H1 (cell line): ENCODE measurements at regions of chr19 and their contacts with region 1.

Region 1: GRCh38 chr19:45643024-45643926 is 4.1 kb upstream of the EML2 start:
- DNase-seq: peak in 1 of 2 experiments; percentile 99
- H3K4me3 ChIP-seq: peak overlapping the region; percentile 34 to 89 (median 70)
- H3K27ac ChIP-seq: no peak overlapping the region
- H3K4me1 ChIP-seq: peaks cover 6 to 30% (median 17%) of the 10 kb centered on the region in 4 experiments
- H3K27me3 ChIP-seq: peaks cover 0 to 6% (median 2%) of the 10 kb centered on the region in 4 experiments; a peak in 4 of 7 replicates
- CTCF ChIP-seq: peak; percentile 97 to 99 (median 98)
- EP300 ChIP-seq: no peak
- POLR2A ChIP-seq: peak in 1 of 2 experiments; percentile 31; a peak in 1 of 3 replicates
- RAD21 ChIP-seq: peak; percentile 96 to 98

Region 2: DNA sequence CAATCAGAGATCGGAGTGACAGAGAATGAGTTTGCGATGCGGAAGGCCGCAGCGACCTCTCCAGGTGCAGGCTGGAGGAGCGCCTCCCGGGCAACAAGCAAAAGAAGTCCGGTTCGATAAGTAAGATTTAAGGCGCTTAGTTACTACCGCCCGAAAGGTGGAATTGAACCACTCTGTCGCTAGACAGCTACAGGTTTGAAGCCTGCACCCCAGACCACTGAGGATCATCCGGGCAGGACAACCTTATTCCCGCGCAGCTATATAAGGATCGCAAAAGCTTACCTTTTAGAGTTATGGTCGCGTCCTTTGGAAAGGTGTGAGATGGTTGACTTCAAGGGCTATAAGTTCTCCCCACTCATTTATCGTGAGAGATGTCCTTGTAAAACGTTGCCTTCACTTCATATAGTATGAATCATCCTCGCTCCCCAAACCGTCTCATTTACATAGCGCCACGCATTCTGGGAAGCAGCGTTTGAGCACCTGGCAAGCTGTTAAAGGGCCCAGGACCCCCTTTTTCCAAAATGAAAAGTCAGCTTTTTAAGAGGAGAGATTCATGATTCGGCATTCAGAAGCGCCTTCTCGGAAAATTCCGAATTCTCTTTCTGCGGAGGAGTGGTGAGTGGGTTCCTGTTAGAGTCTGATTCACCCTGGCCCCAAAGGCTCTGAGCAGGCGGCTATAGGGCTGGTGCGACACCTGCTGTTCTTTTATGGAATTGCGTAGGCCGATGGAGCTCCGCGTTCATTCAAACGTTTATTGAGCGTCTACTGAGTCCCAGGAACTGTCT is 164.6 kb before region 1 on chr19:
- CTCF ChIA-PET with region 1: interaction called, 12 read pairs
- POLR2A ChIA-PET with region 1: no interaction called
- DNase-seq: peak in 1 of 2 experiments; percentile 94
- H3K4me3 ChIP-seq: peak overlapping the region; percentile 44 to 82 (median 75); a peak in 7 of 8 replicates
- H3K27ac ChIP-seq: peak overlapping the region; percentile 97
- H3K4me1 ChIP-seq: peaks cover 2 to 5% (median 3%) of the 10 kb centered on the region in 4 experiments
- H3K27me3 ChIP-seq: no peaks in the 10 kb centered on the region; a peak in 2 of 7 replicates
- CTCF ChIP-seq: peak; percentile 87 to 93 (median 91)
- EP300 ChIP-seq: no peak
- POLR2A ChIP-seq: peak in 1 of 2 experiments; percentile 71; a peak in 2 of 3 replicates
- RAD21 ChIP-seq: peak; percentile 90

Region 3: GRCh38 chr19:45515081-45515624 is 128.1 kb before region 1 on chr19:
- CTCF ChIA-PET with region 1: interaction called, 10 read pairs
- POLR2A ChIA-PET with region 1: no interaction called
- DNase-seq: no peak
- H3K4me3 ChIP-seq: no peak overlapping the region
- H3K27ac ChIP-seq: no peak overlapping the region
- H3K4me1 ChIP-seq: no peaks in the 10 kb centered on the region
- H3K27me3 ChIP-seq: no peaks in the 10 kb centered on the region
- CTCF ChIP-seq: no peak
- EP300 ChIP-seq: no peak
- POLR2A ChIP-seq: no peak
- RAD21 ChIP-seq: no peak

Region 4: DNA sequence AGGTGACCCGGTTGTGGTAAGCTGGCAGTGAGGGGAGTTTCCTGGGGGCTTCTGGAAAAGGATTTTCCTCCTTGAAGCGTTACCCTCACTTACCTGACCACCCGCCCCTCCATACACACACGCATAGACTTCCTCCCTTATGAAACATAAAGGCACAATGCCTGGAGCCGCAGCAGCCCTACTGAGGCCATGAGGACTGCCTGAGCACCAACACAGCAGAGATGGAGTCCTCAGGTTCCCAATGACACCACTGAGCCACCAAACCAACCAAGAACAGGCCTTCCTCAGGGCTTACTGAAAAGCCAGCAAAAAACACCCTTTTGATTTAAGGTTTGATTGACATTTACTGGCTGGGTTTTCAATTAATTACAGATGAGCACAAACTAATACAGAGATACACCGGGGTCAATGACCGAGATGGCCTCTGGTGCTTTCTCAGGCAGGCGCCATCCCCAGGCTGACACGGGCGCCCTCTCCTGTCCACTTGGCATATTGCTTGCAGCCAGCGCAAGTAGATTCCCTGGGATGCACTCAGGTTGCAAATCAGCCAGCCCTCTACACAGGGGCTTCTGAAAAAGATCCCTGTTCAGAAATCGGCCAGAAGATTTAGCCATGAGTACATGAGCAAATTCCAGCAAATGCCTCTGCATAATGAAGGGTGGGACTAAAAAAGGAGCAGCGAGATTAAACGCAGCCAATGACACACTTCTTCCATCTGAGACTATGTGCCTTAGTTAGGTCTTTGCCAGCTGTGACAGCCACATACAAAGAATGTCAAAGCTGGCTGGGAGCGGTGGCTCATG is 73.5 kb before region 1 on chr19:
- CTCF ChIA-PET with region 1: interaction called, 17 read pairs
- POLR2A ChIA-PET with region 1: no interaction called
- DNase-seq: peak; percentile 46 to 96
- H3K4me3 ChIP-seq: no peak overlapping the region
- H3K27ac ChIP-seq: no peak overlapping the region
- H3K4me1 ChIP-seq: no peaks in the 10 kb centered on the region; a peak in 1 of 7 replicates
- H3K27me3 ChIP-seq: no peaks in the 10 kb centered on the region
- CTCF ChIP-seq: peak; percentile 93 to 98 (median 95)
- EP300 ChIP-seq: no peak
- POLR2A ChIP-seq: no peak
- RAD21 ChIP-seq: peak; percentile 79 to 87

Region 5: DNA sequence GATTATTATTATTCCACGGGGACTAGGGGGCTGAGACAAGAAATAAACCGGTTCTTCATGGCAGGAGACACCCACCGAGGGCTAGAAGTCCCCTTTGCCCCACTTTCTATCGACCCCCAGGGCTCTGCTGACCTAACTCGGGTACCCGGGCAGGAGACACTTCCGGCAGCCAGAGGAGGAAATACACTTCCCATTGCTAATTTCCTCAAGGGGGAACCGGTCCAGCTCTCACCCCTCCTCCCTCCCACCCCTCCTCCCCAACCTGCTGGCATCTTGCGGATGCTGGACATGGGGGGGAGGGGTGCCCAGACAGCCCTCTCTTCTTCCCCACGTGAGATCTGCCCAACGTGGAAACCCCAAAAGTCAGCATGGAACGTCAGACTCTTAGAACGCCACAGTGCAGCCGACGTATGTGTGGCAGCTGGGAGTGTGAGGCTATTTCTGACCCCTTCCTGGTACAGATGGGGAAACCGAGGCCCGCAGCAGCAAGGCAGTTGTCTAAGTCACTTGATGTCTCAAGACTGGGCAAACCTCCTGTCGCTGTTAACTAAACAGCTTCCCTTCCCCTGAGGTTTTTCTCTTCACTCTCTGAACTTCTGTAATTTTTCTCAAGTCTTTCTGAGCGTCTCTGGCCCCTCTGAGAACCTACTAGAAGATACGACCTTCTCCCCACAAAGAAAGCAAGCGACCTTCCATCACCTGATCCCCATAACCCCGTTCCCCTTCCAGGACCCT is 44.8 kb before region 1 on chr19:
- CTCF ChIA-PET with region 1: interaction called, 135 read pairs
- POLR2A ChIA-PET with region 1: interaction called, 15 read pairs
- DNase-seq: no peak
- H3K4me3 ChIP-seq: peak overlapping the region; percentile 14 to 58 (median 30); a peak in 6 of 8 replicates
- H3K27ac ChIP-seq: no peak overlapping the region
- H3K4me1 ChIP-seq: peaks cover 12 to 25% (median 13%) of the 10 kb centered on the region in 4 experiments; a peak in 6 of 7 replicates
- H3K27me3 ChIP-seq: peaks cover 36 to 56% (median 49%) of the 10 kb centered on the region in 4 experiments
- CTCF ChIP-seq: no peak
- EP300 ChIP-seq: no peak
- POLR2A ChIP-seq: no peak
- RAD21 ChIP-seq: no peak

Region 6: GRCh38 chr19:45632468-45633196 is 10.6 kb before region 1 on chr19:
- CTCF ChIA-PET with region 1: interaction called, 36 read pairs
- POLR2A ChIA-PET with region 1: interaction called, 7 read pairs
- DNase-seq: peak in 1 of 2 experiments; percentile 99
- H3K4me3 ChIP-seq: peak overlapping the region; percentile 22 to 50 (median 36); a peak in 7 of 8 replicates
- H3K27ac ChIP-seq: 0 out of 2 replicates have a peak overlapping the region, but pooled peaks have one; percentile 1
- H3K4me1 ChIP-seq: peaks cover 0 to 8% (median 7%) of the 10 kb centered on the region in 4 experiments; a peak in 5 of 7 replicates
- H3K27me3 ChIP-seq: no peaks in the 10 kb centered on the region
- CTCF ChIP-seq: no peak
- EP300 ChIP-seq: no peak
- POLR2A ChIP-seq: no peak; a peak in 1 of 3 replicates
- RAD21 ChIP-seq: no peak

Region 7: GRCh38 chr19:45681391-45682015 is 38.2 kb after region 1 on chr19:
- CTCF ChIA-PET with region 1: interaction called, 10 read pairs
- POLR2A ChIA-PET with region 1: interaction called, 3 read pairs
- DNase-seq: peak in 1 of 2 experiments; percentile 95
- H3K4me3 ChIP-seq: peak overlapping the region in 3 of 4 experiments; percentile 11 to 57 (median 33); a peak in 4 of 8 replicates
- H3K27ac ChIP-seq: no peak overlapping the region
- H3K4me1 ChIP-seq: peaks cover 0 to 9% (median 5%) of the 10 kb centered on the region in 4 experiments; a peak in 5 of 7 replicates
- H3K27me3 ChIP-seq: peaks cover 0 to 8% (median 0%) of the 10 kb centered on the region in 4 experiments; a peak in 4 of 7 replicates
- CTCF ChIP-seq: peak; percentile 81 to 96 (median 91)
- EP300 ChIP-seq: peak in 1 of 2 experiments; percentile 70; a peak in 1 of 3 replicates
- POLR2A ChIP-seq: no peak
- RAD21 ChIP-seq: peak; percentile 64 to 75